Activated naive CD4-positive, alpha-beta T cell treated with anti-CD3 and anti-CD28 coated beads for 36 hours (primary cell): ENCODE measurements at regions of chr18 and their contacts with region 1.

Region 1: DNA sequence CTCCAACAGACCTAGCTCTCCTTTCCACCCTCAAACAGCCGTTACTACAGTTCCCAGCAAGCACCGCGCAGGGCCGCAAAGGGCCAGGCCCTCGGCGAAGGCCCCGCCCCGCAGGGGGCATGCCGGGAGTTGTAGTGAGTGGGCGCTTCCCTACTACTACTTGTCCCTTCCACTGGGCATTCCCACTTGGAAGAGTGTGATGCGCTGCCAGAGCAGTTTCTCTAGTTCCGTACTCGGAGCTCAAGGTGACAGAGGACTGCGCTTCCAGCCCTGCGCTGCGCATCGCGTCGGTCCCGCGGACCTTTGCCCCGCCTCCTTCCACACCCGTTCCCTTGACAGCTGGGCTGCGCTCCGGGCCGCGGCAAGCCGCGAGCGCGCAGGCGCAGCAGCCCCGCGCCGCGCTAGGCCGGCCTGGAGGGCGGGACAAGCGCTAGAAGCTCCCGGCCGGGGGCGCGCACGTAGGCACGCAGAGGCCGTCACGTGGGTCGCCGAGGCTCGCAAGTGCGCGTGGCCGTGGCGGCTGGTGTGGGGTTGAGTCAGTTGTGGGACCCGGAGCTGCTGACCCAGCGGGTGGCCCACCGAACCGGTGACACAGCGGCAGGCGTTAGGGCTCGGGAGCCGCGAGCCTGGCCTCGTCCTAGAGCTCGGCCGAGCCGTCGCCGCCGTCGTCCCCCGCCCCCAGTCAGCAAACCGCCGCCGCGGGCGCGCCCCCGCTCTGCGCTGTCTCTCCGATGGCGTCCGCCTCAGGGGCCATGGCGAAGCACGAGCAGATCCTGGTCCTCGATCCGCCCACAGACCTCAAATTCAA is at the start of gene VAPA:
- DNase-seq: peak; percentile 93
- H3K4me3 Mint-ChIP-seq: peak within 1 kb of the TSS; percentile 91
- H3K27ac Mint-ChIP-seq: peak within 1 kb of the TSS; percentile 93
- H3K4me1 Mint-ChIP-seq: peaks cover 25% of the 10 kb centered on the region
- H3K27me3 Mint-ChIP-seq: no peaks in the 10 kb centered on the region
- total RNA-seq, gene VAPA: 150 to 159 TPM

Region 2: DNA sequence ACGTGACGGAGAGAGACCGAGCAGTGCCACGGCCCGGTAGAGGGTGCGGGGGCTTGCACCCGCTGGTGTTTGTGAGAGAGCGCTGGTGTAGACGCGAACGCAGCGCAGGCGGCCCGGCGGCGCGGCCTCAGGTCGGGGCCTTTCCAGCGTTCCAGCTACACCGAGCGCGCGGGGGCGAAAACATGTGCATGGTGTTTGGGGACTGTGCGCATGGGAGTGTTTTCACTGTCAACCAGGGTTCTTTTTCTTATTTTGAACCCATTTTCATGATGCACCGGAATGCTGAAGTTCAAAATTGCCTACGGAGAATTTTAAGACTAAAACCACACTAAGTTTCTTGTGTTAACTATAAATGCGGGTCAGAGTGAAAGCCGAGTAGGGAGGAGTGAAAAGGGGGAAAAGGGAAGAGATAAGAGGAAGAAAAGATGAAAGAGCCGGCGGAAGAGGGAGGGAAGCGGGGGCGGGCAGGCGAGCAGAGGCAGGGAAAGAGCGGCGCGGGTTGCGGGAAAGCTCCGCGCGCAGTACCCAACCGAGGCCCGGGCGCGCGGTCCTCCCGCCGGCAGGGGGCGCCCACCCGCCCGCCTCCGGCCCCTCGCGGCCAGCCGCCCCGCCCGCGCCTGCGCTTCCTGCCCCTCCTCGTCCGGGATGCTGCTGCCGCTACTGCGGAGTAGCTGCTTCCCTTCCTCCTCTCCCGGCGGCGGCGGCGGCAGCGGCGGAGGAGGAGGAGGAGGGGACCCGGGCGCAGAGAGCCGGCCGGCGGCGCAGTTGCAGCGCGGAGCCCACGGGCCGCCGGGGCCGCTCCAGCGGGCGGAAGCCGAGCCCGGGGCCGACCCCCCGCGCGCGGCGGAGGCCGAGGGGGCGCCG is 1304.7 kb before region 1 on chr18 and contains the start of gene RAB12:
- CTCF ChIA-PET with region 1: no interaction called
- intact Hi-C with region 1: loop called (anchors 1 kb)
- DNase-seq: peak; percentile 87
- H3K4me3 Mint-ChIP-seq: peak within 1 kb of the TSS; percentile 89
- H3K27ac Mint-ChIP-seq: peak within 1 kb of the TSS; percentile 91
- H3K4me1 Mint-ChIP-seq: peaks cover 47% of the 10 kb centered on the region
- H3K27me3 Mint-ChIP-seq: no peaks in the 10 kb centered on the region
- total RNA-seq, gene RAB12: 11.0 to 11.9 TPM

Region 3: DNA sequence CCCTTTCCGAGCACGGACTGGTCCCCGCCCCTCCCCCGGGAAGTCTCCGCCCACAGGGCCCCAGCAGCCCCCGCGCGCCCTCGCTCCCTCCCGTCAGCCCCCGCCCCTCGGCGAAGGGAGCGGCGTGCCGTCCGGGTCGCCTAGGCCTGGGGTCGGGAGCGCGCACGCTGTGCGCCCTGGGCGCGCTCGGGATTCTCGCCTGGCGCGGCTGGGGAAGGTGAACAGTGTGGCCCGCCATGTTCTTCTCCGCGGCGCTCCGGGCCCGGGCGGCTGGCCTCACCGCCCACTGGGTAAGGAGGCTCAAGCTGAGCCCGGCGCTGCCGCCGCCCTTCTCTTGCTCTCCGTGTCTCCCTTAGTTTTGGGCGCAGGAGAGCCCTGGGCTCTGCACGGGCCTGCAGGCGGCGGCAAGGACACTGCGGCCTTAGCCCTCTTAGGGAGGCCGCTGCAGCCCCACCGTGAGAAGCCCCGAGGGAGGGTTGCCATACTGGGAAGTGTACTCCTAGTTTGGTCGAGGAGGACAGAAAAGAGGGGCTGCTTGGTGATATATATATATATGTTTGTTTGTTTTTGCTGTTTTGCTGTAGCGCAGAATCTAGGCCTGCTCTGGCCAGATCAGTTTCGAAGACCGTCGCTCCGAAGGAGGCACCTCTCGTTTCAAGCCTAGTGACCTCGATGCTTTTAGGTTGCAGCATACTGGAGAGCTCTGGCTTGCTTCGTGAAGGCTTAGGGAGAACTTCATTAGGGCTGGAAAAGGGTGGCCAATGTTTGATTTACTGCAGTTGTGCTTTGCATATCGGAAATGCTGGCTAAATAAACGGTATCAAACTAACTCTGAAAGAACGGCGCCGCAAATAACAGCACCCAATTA is 811.0 kb before region 1 on chr18 and contains the start of gene NDUFV2:
- CTCF ChIA-PET with region 1: no interaction called
- intact Hi-C with region 1: loop called (anchors 2 kb)
- DNase-seq: peak; percentile 98
- H3K4me3 Mint-ChIP-seq: peak within 1 kb of the TSS; percentile 81
- H3K27ac Mint-ChIP-seq: peak within 1 kb of the TSS; percentile 95
- H3K4me1 Mint-ChIP-seq: peaks cover 43% of the 10 kb centered on the region
- H3K27me3 Mint-ChIP-seq: no peaks in the 10 kb centered on the region
- total RNA-seq, gene NDUFV2: 290 to 303 TPM

Region 4: DNA sequence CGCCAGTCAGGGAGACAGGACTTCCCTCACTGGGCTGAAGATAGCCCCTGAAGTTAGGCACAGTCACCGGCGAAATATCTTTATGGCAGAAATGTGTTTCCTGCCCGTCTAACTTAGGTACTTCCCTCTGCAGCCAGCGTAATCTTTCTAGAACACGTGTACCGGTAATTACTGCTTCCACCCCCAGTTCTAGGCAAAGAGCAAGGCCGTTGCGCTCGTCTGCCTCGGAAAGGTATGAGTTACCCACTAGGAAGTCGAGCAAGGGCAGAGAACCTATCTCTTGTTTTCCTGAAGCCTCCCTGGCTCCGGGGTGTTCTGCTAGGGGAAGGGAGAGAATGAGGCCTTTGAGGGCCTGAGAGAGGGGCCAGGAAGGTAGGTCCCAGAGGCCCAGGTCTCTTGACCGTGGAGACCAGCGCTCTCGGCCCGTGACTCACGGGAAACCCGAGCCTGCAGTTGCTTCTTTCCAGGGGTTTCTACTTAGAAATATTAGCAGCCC is 509.1 kb before region 1 on chr18:
- CTCF ChIA-PET with region 1: no interaction called
- intact Hi-C with region 1: loop called (anchors 2 kb)
- DNase-seq: peak; percentile 68
- H3K4me3 Mint-ChIP-seq: peak overlapping the region; percentile 70
- H3K27ac Mint-ChIP-seq: peak overlapping the region; percentile 57
- H3K4me1 Mint-ChIP-seq: peaks cover 10% of the 10 kb centered on the region
- H3K27me3 Mint-ChIP-seq: no peaks in the 10 kb centered on the region

Region 5: GRCh38 chr18:9614401-9615279 is 299.1 kb before region 1 on chr18 and contains the start of gene PPP4R1:
- CTCF ChIA-PET with region 1: interaction called, 4 read pairs
- intact Hi-C with region 1: loop called (anchors 1 kb)
- DNase-seq: peak; percentile 71
- H3K4me3 Mint-ChIP-seq: peak within 1 kb of the TSS; percentile 93
- H3K27ac Mint-ChIP-seq: peak within 1 kb of the TSS; percentile 77
- H3K4me1 Mint-ChIP-seq: peaks cover 29% of the 10 kb centered on the region
- H3K27me3 Mint-ChIP-seq: no peaks in the 10 kb centered on the region
- total RNA-seq, gene PPP4R1: 23.0 to 23.6 TPM

Region 6: GRCh38 chr18:9926223-9926894 is 12.6 kb after region 1 on chr18:
- CTCF ChIA-PET with region 1: no interaction called
- intact Hi-C with region 1: loop called (anchors 1 kb)
- DNase-seq: no peak
- H3K4me3 Mint-ChIP-seq: no peak overlapping the region
- H3K27ac Mint-ChIP-seq: no peak overlapping the region
- H3K4me1 Mint-ChIP-seq: peaks cover 69% of the 10 kb centered on the region
- H3K27me3 Mint-ChIP-seq: no peaks in the 10 kb centered on the region

Region 7: GRCh38 chr18:10525371-10526210 is 611.9 kb after region 1 on chr18 and contains the start of gene NAPG:
- CTCF ChIA-PET with region 1: no interaction called
- intact Hi-C with region 1: loop called (anchors 1 kb)
- DNase-seq: peak; percentile 88
- H3K4me3 Mint-ChIP-seq: peak within 1 kb of the TSS; percentile 95
- H3K27ac Mint-ChIP-seq: peak within 1 kb of the TSS; percentile 89
- H3K4me1 Mint-ChIP-seq: peaks cover 45% of the 10 kb centered on the region
- H3K27me3 Mint-ChIP-seq: no peaks in the 10 kb centered on the region
- total RNA-seq, gene NAPG: 20.2 to 21.0 TPM